ENCODE measurements at regions of chr16 and their contacts with region 1.

Region 1: GRCh38 chr16:78237841-78238240 is 138.4 kb downstream of the WWOX start:
- DNase-seq: no peak
- H3K4me3 ChIP-seq: no peak overlapping the region
- H3K27ac ChIP-seq: no peak overlapping the region
- H3K4me1 ChIP-seq: peaks cover 0 to 26% (median 0%) of the 10 kb centered on the region in 4 donors
- H3K27me3 ChIP-seq: no peaks in the 10 kb centered on the region
- CTCF ChIP-seq: no peak

Region 2: GRCh38 chr16:77868478-77868877 is 369.4 kb before region 1 on chr16:
- intact Hi-C with region 1: no loop called
- DNase-seq: no peak
- H3K4me3 ChIP-seq: no peak overlapping the region
- H3K27ac ChIP-seq: no peak overlapping the region
- H3K4me1 ChIP-seq: peaks cover 0 to 38% (median 21%) of the 10 kb centered on the region in 4 donors
- H3K27me3 ChIP-seq: no peaks in the 10 kb centered on the region
- CTCF ChIP-seq: no peak

Region 3: DNA sequence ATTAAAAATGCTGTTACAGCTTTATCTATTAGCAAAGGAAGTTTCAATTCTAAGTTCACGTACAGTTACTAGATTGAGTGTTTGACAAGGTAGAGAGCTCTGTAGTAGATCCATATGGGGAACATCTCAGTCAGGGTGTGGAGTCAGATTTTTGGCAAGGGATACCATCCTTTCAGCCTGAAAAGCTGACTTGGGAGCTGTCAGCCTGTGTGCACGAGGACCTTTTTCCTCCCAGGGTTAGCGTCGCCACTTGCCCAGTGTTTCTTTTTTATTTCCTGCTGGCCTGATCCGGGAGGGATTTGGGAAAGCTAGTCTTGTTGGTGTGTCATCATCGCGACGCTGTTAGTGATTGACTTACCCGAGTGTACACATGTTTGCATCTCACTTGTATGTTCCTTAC is 108.9 kb before region 1 on chr16:
- intact Hi-C with region 1: loop called (anchors 2 kb)
- DNase-seq: no peak
- H3K4me3 ChIP-seq: no peak overlapping the region
- H3K27ac ChIP-seq: no peak overlapping the region
- H3K4me1 ChIP-seq: peaks cover 0 to 28% (median 13%) of the 10 kb centered on the region in 4 donors
- H3K27me3 ChIP-seq: no peaks in the 10 kb centered on the region
- CTCF ChIP-seq: no peak

Measured in tibial artery (tissue), 4 donors.